ENCODE measurements at regions of chr7 and their contacts with region 1.

Region 1: GRCh38 chr7:44847508-44847920 is 373 bp downstream of the H2AZ2 start:
- DNase-seq: peak; percentile 81
- H3K4me3 Mint-ChIP-seq: peak overlapping the region; percentile 87
- H3K27ac Mint-ChIP-seq: peak overlapping the region; percentile 90
- H3K4me1 Mint-ChIP-seq: peaks cover 12% of the 10 kb centered on the region
- H3K27me3 Mint-ChIP-seq: no peaks in the 10 kb centered on the region
- CTCF ChIP-seq: peak; percentile 92

Region 2: GRCh38 chr7:44490351-44491200 is 356.9 kb before region 1 on chr7 and contains the start of gene NUDCD3:
- CTCF ChIA-PET with region 1: no interaction called
- POLR2A ChIA-PET with region 1: interaction called, 12 read pairs
- intact Hi-C with region 1: no loop called
- DNase-seq: peak; percentile 84
- H3K4me3 Mint-ChIP-seq: peak within 1 kb of the TSS; percentile 80
- H3K27ac Mint-ChIP-seq: peak within 1 kb of the TSS; percentile 88
- H3K4me1 Mint-ChIP-seq: peaks cover 37% of the 10 kb centered on the region
- H3K27me3 Mint-ChIP-seq: no peaks in the 10 kb centered on the region
- CTCF ChIP-seq: no peak
- total RNA-seq, gene NUDCD3: 85.5 and 87.7 TPM in 2 replicates

Region 3: GRCh38 chr7:44587843-44588711 is 259.4 kb before region 1 on chr7:
- CTCF ChIA-PET with region 1: interaction called, 7 read pairs
- POLR2A ChIA-PET with region 1: interaction called, 23 read pairs
- intact Hi-C with region 1: loop called (anchors 1 kb)
- DNase-seq: peak; percentile 76
- H3K4me3 Mint-ChIP-seq: no peak overlapping the region
- H3K27ac Mint-ChIP-seq: no peak overlapping the region
- H3K4me1 Mint-ChIP-seq: peaks cover 7% of the 10 kb centered on the region
- H3K27me3 Mint-ChIP-seq: peaks cover 6% of the 10 kb centered on the region
- CTCF ChIP-seq: peak; percentile 72

Region 4: GRCh38 chr7:44678471-44679179 is 168.9 kb before region 1 on chr7:
- CTCF ChIA-PET with region 1: interaction called, 6 read pairs
- POLR2A ChIA-PET with region 1: interaction called, 5 read pairs
- intact Hi-C with region 1: loop called (anchors 10 kb)
- DNase-seq: peak; percentile 93
- H3K4me3 Mint-ChIP-seq: peak overlapping the region; percentile 21
- H3K27ac Mint-ChIP-seq: no peak overlapping the region
- H3K4me1 Mint-ChIP-seq: peaks cover 40% of the 10 kb centered on the region
- H3K27me3 Mint-ChIP-seq: no peaks in the 10 kb centered on the region
- CTCF ChIP-seq: no peak

Region 5: GRCh38 chr7:44693721-44694285 is 153.7 kb before region 1 on chr7:
- CTCF ChIA-PET with region 1: no interaction called
- POLR2A ChIA-PET with region 1: no interaction called
- intact Hi-C with region 1: no loop called
- DNase-seq: peak; percentile 63
- H3K4me3 Mint-ChIP-seq: no peak overlapping the region
- H3K27ac Mint-ChIP-seq: peak overlapping the region; percentile 92
- H3K4me1 Mint-ChIP-seq: peaks cover 8% of the 10 kb centered on the region
- H3K27me3 Mint-ChIP-seq: no peaks in the 10 kb centered on the region
- CTCF ChIP-seq: no peak

Region 6: GRCh38 chr7:44858161-44858560 is 10.6 kb after region 1 on chr7:
- CTCF ChIA-PET with region 1: interaction called, 8 read pairs
- POLR2A ChIA-PET with region 1: interaction called, 14 read pairs
- intact Hi-C with region 1: no loop called
- DNase-seq: no peak
- H3K4me3 Mint-ChIP-seq: no peak overlapping the region
- H3K27ac Mint-ChIP-seq: no peak overlapping the region
- H3K4me1 Mint-ChIP-seq: no peaks in the 10 kb centered on the region
- H3K27me3 Mint-ChIP-seq: no peaks in the 10 kb centered on the region
- CTCF ChIP-seq: no peak

Region 7: DNA sequence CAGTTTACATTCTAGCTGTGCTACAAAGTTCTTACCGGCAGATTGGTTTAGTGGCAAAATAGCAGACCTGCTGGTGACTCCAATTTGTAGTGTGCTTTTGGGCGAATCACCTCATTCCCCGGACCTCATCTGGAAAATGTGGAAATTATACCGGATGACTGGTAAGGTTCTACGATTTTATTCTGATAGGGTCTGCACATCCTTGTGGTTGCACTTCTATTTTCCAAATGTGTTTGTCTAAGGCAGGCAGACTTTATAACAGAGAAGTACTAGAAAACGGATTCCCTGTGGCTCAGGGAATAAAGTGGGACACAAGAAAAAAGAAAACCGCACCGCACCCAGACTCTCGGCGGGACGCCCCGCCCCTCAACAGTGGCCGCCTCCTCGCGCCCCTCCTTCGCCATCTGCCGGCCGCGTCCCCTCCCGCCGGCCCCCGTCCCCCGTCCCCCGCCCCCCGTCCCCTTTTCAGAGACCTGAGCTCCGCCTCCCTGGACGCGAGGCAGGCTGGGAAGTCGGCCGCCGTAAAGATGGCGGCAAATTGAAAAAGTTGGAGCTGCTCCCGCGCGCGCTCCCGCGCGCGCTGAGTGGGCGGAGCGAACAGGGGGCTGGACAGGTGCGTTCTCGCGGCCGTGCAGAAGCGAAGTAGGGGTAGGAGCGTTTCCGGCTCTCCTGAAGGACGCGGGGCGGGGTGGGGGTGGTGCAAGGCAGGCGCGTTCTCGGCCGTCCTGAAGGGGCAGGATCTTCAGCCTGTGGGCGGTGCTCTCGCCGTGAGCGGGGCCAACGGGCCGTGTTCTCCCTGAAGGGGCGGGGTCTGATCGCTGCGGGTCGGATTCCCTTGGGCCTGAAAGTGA is 152.0 kb after region 1 on chr7:
- CTCF ChIA-PET with region 1: interaction called, 4 read pairs
- POLR2A ChIA-PET with region 1: interaction called, 23 read pairs
- intact Hi-C with region 1: no loop called
- DNase-seq: peak; percentile 99
- H3K4me3 Mint-ChIP-seq: peak overlapping the region; percentile 75
- H3K27ac Mint-ChIP-seq: peak overlapping the region; percentile 16
- H3K4me1 Mint-ChIP-seq: peaks cover 29% of the 10 kb centered on the region
- H3K27me3 Mint-ChIP-seq: no peaks in the 10 kb centered on the region
- CTCF ChIP-seq: no peak

Region 8: GRCh38 chr7:45574521-45575500 is 727.3 kb after region 1 on chr7:
- CTCF ChIA-PET with region 1: no interaction called
- POLR2A ChIA-PET with region 1: no interaction called
- intact Hi-C with region 1: no loop called
- DNase-seq: peak; percentile 16
- H3K4me3 Mint-ChIP-seq: no peak overlapping the region
- H3K27ac Mint-ChIP-seq: no peak overlapping the region
- H3K4me1 Mint-ChIP-seq: no peaks in the 10 kb centered on the region
- H3K27me3 Mint-ChIP-seq: peaks cover 56% of the 10 kb centered on the region
- CTCF ChIP-seq: no peak

Measured in MCF 10A (cell line).